CD8-positive, alpha-beta memory T cell (primary cell): ENCODE measurements at regions of chr10 and their contacts with region 1.

Region 1: GRCh38 chr10:71727738-71728737 is 8.5 kb upstream of the C10orf105 start:
- DNase-seq: peak; percentile 65 to 90 (median 85)
- H3K4me3 ChIP-seq: peak overlapping the region; percentile 24
- H3K4me3 Mint-ChIP-seq: peak overlapping the region; percentile 64 to 88 (median 79)
- H3K27ac ChIP-seq: peak overlapping the region; percentile 77
- H3K27ac Mint-ChIP-seq: peak overlapping the region; percentile 97 to 99 (median 98)
- H3K4me1 ChIP-seq: peaks cover 96% of the 10 kb centered on the region
- H3K4me1 Mint-ChIP-seq: peaks cover 73 to 96% (median 81%) of the 10 kb centered on the region in 3 donors
- H3K27me3 ChIP-seq: no peaks in the 10 kb centered on the region
- H3K27me3 Mint-ChIP-seq: peaks cover 0 to 2% of the 10 kb centered on the region in 2 donors

Region 2: GRCh38 chr10:71582019-71582418 is 146.0 kb before region 1 on chr10:
- CTCF ChIA-PET with region 1: no interaction called
- POLR2A ChIA-PET with region 1: no interaction called
- DNase-seq: no peak
- H3K4me3 ChIP-seq: no peak overlapping the region
- H3K4me3 Mint-ChIP-seq: no peak overlapping the region
- H3K27ac ChIP-seq: no peak overlapping the region
- H3K27ac Mint-ChIP-seq: no peak overlapping the region
- H3K4me1 ChIP-seq: no peaks in the 10 kb centered on the region
- H3K4me1 Mint-ChIP-seq: no peaks in the 10 kb centered on the region
- H3K27me3 ChIP-seq: no peaks in the 10 kb centered on the region
- H3K27me3 Mint-ChIP-seq: peaks cover 2 to 3% of the 10 kb centered on the region in 2 donors

Region 3: GRCh38 chr10:71696628-71697326 is 31.3 kb before region 1 on chr10:
- CTCF ChIA-PET with region 1: interaction called, 24 read pairs
- POLR2A ChIA-PET with region 1: interaction called, 4 read pairs
- DNase-seq: peak; percentile 35 to 75 (median 55)
- H3K4me3 ChIP-seq: no peak overlapping the region
- H3K4me3 Mint-ChIP-seq: peak overlapping the region in 5 of 7 donors; percentile 11 to 68 (median 28)
- H3K27ac ChIP-seq: no peak overlapping the region
- H3K27ac Mint-ChIP-seq: peak overlapping the region in 5 of 8 donors; percentile 51 to 88 (median 68)
- H3K4me1 ChIP-seq: peaks cover 54% of the 10 kb centered on the region
- H3K4me1 Mint-ChIP-seq: peaks cover 44 to 62% (median 52%) of the 10 kb centered on the region in 3 donors
- H3K27me3 ChIP-seq: no peaks in the 10 kb centered on the region
- H3K27me3 Mint-ChIP-seq: no peaks in the 10 kb centered on the region

Region 4: DNA sequence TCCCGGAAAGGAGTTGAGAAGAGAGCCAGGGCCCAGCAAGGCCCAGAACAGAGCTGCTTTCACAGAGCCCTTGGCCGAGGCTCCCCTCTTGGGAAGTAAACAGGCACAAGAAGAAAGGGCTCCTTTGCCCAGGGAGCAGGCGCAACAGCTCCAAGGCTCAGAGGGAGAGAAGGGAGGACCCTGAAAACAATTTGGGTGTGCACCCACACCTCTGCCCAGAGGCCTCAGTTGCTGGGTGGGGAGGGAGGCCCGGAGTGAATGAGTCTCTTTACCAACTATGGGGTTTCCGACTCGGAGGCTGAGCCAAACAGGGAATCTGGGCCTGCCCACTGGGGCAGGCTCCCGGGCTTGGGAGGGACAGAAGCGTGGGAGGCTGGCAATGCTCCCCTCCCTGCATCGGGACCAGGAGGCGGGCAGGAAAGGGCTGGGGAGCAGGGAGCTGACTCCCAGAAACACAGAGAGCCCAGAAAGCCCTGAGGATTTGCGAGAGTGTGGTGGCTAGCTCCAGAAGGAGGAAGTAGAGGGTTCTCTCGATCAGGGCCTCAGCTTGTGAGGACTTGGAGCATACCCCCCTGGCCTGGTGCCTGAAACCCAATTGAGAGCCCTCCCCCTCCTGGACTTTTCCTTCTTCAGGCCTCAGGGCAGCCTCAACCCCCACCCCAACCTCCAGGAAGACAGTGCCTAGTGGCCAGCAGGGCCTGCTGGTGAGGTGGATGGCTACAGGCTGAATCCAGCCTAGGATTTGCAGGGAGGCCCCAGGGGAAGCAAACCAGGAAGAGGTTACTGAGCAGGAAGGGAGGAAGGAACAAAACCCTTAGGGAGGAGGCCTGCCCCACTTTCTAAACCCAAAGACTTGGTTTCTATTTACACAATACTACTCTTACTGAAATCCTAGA is 14.7 kb before region 1 on chr10:
- CTCF ChIA-PET with region 1: interaction called, 70 read pairs
- POLR2A ChIA-PET with region 1: interaction called, 10 read pairs
- DNase-seq: peak in 4 of 5 donors; percentile 27 to 62 (median 46)
- H3K4me3 ChIP-seq: peak overlapping the region; percentile 36
- H3K4me3 Mint-ChIP-seq: peak overlapping the region; percentile 73 to 90 (median 88)
- H3K27ac ChIP-seq: peak overlapping the region; percentile 66
- H3K27ac Mint-ChIP-seq: peak overlapping the region; percentile 97 to 100 (median 99)
- H3K4me1 ChIP-seq: peaks cover 61% of the 10 kb centered on the region
- H3K4me1 Mint-ChIP-seq: peaks cover 56 to 86% (median 62%) of the 10 kb centered on the region in 3 donors
- H3K27me3 ChIP-seq: no peaks in the 10 kb centered on the region
- H3K27me3 Mint-ChIP-seq: no peaks in the 10 kb centered on the region

Region 5: DNA sequence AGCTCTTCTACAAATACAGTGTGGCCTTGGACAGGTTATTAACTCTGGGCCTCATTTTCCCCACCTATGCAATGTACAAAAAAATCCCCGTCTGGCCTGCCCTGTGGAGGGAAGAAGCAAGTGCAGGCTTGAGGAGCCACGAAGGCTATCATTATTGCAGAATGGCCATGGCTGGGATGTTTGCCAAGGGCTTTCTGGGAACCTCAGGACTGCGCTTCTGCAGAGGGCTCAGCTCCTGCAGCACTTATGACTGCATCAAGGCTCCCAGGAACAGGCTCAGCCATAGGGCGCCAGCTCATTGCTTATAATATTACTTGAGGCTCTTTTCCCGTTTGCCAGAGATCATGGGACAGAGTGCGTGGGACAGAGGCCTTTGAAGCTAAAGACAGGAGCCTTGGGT is 12.0 kb after region 1 on chr10:
- CTCF ChIA-PET with region 1: interaction called, 152 read pairs
- POLR2A ChIA-PET with region 1: interaction called, 29 read pairs
- DNase-seq: no peak
- H3K4me3 ChIP-seq: no peak overlapping the region
- H3K4me3 Mint-ChIP-seq: peak overlapping the region in 5 of 7 donors; percentile 15 to 70 (median 51)
- H3K27ac ChIP-seq: no peak overlapping the region
- H3K27ac Mint-ChIP-seq: peak overlapping the region; percentile 76 to 99 (median 96)
- H3K4me1 ChIP-seq: peaks cover 100% of the 10 kb centered on the region
- H3K4me1 Mint-ChIP-seq: peaks cover 93 to 100% (median 99%) of the 10 kb centered on the region in 3 donors
- H3K27me3 ChIP-seq: no peaks in the 10 kb centered on the region
- H3K27me3 Mint-ChIP-seq: peaks cover 0 to 2% of the 10 kb centered on the region in 2 donors

Region 6: GRCh38 chr10:71748671-71749191 is 20.7 kb after region 1 on chr10:
- CTCF ChIA-PET with region 1: interaction called, 152 read pairs
- POLR2A ChIA-PET with region 1: interaction called, 29 read pairs
- DNase-seq: peak; percentile 62 to 89 (median 82)
- H3K4me3 ChIP-seq: peak overlapping the region; percentile 38
- H3K4me3 Mint-ChIP-seq: peak overlapping the region; percentile 64 to 87 (median 75)
- H3K27ac ChIP-seq: peak overlapping the region; percentile 60
- H3K27ac Mint-ChIP-seq: peak overlapping the region; percentile 93 to 99 (median 96)
- H3K4me1 ChIP-seq: peaks cover 99% of the 10 kb centered on the region
- H3K4me1 Mint-ChIP-seq: peaks cover 94 to 98% (median 96%) of the 10 kb centered on the region in 3 donors
- H3K27me3 ChIP-seq: no peaks in the 10 kb centered on the region
- H3K27me3 Mint-ChIP-seq: no peaks in the 10 kb centered on the region

Region 7: GRCh38 chr10:71766702-71767419 is 38.8 kb after region 1 on chr10:
- CTCF ChIA-PET with region 1: interaction called, 122 read pairs
- POLR2A ChIA-PET with region 1: interaction called, 42 read pairs
- DNase-seq: peak in 2 of 5 donors; percentile 48 to 70
- H3K4me3 ChIP-seq: peak overlapping the region; percentile 18
- H3K4me3 Mint-ChIP-seq: peak overlapping the region; percentile 67 to 91 (median 78)
- H3K27ac ChIP-seq: peak overlapping the region; percentile 45
- H3K27ac Mint-ChIP-seq: peak overlapping the region; percentile 92 to 100 (median 97)
- H3K4me1 ChIP-seq: peaks cover 97% of the 10 kb centered on the region
- H3K4me1 Mint-ChIP-seq: peaks cover 91 to 100% (median 98%) of the 10 kb centered on the region in 3 donors
- H3K27me3 ChIP-seq: no peaks in the 10 kb centered on the region
- H3K27me3 Mint-ChIP-seq: no peaks in the 10 kb centered on the region